ENCODE measurements at regions of chr16 and their contacts with region 1.

Region 1: GRCh38 chr16:21300309-21301167 is 22.4 kb upstream of the CRYM start:
- H3K4me3 Mint-ChIP-seq: peak overlapping the region; percentile 97
- H3K27ac Mint-ChIP-seq: peak overlapping the region; percentile 92
- H3K4me1 Mint-ChIP-seq: peaks cover 34% of the 10 kb centered on the region
- H3K27me3 Mint-ChIP-seq: peaks cover 6% of the 10 kb centered on the region

Region 2: GRCh38 chr16:21158208-21159110 is 142.1 kb before region 1 on chr16 and contains the start of gene LDAF1:
- intact Hi-C with region 1: loop called (anchors 2 kb)
- H3K4me3 Mint-ChIP-seq: peak within 1 kb of the TSS; percentile 91
- H3K27ac Mint-ChIP-seq: peak within 1 kb of the TSS; percentile 80
- H3K4me1 Mint-ChIP-seq: peaks cover 19% of the 10 kb centered on the region
- H3K27me3 Mint-ChIP-seq: peaks cover 2% of the 10 kb centered on the region

Region 3: DNA sequence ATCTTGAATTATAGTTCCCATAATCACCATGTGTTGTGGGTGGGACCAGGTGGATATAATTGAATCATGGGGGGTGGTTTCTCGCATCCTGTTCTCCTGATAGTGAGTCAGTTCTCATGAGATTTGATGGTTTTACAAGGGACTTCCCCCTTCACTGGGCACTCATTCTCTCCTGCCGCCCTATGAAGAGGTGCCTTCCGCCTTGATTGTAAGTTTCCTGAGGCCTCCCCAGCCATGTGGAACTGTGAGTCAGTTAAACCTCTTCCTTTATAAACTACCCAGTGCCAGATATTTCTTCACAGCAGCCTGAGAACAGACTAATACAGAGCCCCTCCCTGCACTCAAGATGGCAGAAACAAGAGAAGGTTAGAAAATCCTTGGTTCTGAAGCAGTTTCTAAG is 115.7 kb before region 1 on chr16:
- intact Hi-C with region 1: loop called (anchors 2 kb)
- H3K4me3 Mint-ChIP-seq: no peak overlapping the region
- H3K27ac Mint-ChIP-seq: no peak overlapping the region
- H3K4me1 Mint-ChIP-seq: peaks cover 13% of the 10 kb centered on the region
- H3K27me3 Mint-ChIP-seq: peaks cover 8% of the 10 kb centered on the region

Region 4: GRCh38 chr16:21574381-21574780 is 273.8 kb after region 1 on chr16:
- intact Hi-C with region 1: no loop called
- H3K4me3 Mint-ChIP-seq: no peak overlapping the region
- H3K27ac Mint-ChIP-seq: no peak overlapping the region
- H3K4me1 Mint-ChIP-seq: no peaks in the 10 kb centered on the region
- H3K27me3 Mint-ChIP-seq: peaks cover 19% of the 10 kb centered on the region

Region 5: DNA sequence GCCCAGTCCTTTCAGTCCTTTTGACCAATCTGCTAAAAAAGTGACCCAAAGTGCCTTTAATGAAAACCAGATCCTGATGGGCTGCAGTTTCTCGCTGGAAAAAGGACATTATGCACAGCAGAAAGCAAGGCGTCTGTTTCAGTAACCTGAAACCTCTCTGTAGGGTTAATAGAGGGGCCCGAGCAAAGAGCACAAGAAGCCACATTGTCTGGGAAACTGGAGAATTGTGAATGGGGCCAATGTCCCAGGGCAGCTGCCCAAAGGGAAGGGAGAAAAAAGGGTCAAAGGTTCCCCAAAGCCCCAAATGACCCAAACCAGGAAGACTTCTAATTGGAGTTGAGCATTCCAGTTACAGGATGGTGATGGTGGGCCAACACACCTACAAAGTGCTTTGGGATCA is 366.2 kb after region 1 on chr16:
- intact Hi-C with region 1: no loop called
- H3K4me3 Mint-ChIP-seq: no peak overlapping the region
- H3K27ac Mint-ChIP-seq: no peak overlapping the region
- H3K4me1 Mint-ChIP-seq: peaks cover 14% of the 10 kb centered on the region
- H3K27me3 Mint-ChIP-seq: peaks cover 14% of the 10 kb centered on the region